ENCODE measurements at regions of chr12 and their contacts with region 1.

Region 1: GRCh38 chr12:11581179-11581755 is 68.2 kb upstream of the ETV6 start:
- DNase-seq: peak; percentile 65
- H3K4me3 ChIP-seq: no peak overlapping the region
- H3K27ac ChIP-seq: no peak overlapping the region
- H3K4me1 ChIP-seq: peaks cover 8% of the 10 kb centered on the region
- H3K27me3 ChIP-seq: no peaks in the 10 kb centered on the region
- CTCF ChIP-seq: peak in 1 of 2 donors; percentile 16
- POLR2A ChIP-seq: no peak

Region 2: DNA sequence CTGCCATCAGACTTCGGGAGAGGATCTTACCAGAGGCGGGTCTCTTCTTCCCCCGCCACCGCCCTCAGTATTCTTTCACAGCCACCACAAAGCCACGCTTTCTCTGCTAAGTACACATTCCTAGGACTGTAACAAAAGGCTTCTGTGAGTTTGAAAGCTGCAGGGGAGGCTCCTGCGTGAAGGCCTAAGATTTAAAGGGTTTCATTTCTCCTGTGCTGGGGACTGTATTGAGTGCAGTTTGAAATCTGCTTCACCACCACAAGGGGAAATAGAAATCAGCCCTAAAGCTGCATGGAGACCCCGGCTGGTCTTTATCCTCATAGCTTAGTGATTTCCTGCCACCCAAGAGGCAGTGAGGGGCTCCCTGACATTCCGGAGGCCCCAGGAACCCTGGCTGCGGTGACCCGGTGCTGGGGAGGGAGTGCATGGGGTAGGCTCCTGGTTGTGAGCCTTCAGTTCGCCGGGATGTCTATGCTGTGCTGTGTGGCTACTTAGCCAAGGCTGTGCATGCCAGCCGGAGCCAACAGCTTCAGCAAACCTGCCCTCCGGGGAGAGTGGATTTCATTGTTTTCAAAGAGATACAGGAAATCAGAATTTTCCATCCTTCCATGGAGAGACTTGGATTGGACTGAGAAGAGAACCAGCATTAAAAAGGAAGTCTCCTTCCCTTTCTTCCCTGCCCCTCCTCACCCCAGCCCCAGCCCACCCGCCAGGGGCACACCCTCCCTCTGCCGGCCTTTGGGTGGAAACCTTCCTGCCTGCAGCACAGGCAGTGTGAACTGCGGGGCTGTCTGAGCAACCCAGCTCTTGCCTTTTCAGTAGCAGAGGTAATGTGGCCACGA is 231.5 kb after region 1 on chr12:
- CTCF ChIA-PET with region 1: interaction called, 6 read pairs
- POLR2A ChIA-PET with region 1: no interaction called
- dilution Hi-C with region 1: no loop called
- intact Hi-C with region 1: loop called (anchors 5 kb)
- DNase-seq: peak; percentile 59
- H3K4me3 ChIP-seq: peak overlapping the region in 1 of 3 experiments; percentile 29
- H3K27ac ChIP-seq: peak overlapping the region; percentile 77
- H3K4me1 ChIP-seq: peaks cover 35% of the 10 kb centered on the region
- H3K27me3 ChIP-seq: no peaks in the 10 kb centered on the region
- CTCF ChIP-seq: peak in 1 of 2 donors; percentile 40
- POLR2A ChIP-seq: peak; percentile 46

Region 3: DNA sequence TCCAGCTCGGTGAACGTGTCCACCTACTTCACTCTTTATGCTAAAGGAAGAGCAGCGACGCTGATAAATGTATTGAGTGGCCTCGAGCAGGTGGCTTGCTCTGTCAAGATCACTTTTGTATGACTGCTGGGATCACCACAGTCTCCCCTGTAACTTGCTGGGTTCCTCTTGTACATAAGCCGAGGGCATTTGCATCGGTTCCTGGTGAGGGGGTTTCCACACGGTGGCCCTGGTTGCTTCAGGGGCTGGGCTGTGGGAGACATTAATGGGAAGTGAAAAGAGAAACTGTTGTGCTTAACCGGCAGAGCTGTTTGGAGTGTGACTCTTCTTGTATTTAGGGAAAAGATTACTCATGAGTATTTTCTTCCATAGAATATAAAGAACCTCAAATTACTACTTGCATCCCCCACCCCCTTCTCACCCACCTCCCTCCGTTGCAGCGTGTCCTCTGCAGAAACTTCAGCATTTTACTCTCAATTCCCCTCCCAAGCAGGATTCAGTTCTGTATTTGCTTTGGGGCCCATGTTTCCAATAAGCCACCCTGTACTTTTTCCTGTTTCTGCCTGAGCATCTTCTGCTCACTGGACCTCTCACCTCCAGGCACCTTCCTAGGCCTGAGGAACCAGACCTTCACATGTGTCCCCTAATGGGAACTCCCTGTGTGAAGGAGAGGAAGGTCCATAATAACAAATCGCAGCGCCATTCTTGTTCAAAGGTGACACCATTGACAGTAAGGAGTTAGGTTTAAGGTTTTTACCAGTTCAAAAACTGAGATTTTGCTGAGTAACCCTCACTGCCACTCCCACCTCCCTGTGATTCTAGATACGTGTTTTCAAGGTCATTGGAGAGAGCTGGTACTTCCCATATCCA is 255.2 kb after region 1 on chr12:
- CTCF ChIA-PET with region 1: interaction called, 4 read pairs
- POLR2A ChIA-PET with region 1: no interaction called
- dilution Hi-C with region 1: no loop called
- intact Hi-C with region 1: loop called (anchors 5 kb)
- DNase-seq: no peak
- H3K4me3 ChIP-seq: no peak overlapping the region
- H3K27ac ChIP-seq: no peak overlapping the region
- H3K4me1 ChIP-seq: peaks cover 49% of the 10 kb centered on the region
- H3K27me3 ChIP-seq: no peaks in the 10 kb centered on the region
- CTCF ChIP-seq: no peak
- POLR2A ChIP-seq: no peak

Region 4: GRCh38 chr12:11891754-11892386 is 310.6 kb after region 1 on chr12:
- CTCF ChIA-PET with region 1: interaction called, 26 read pairs
- POLR2A ChIA-PET with region 1: no interaction called
- dilution Hi-C with region 1: no loop called
- intact Hi-C with region 1: loop called (anchors 2 kb)
- DNase-seq: peak; percentile 53
- H3K4me3 ChIP-seq: no peak overlapping the region
- H3K27ac ChIP-seq: no peak overlapping the region
- H3K4me1 ChIP-seq: peaks cover 13% of the 10 kb centered on the region
- H3K27me3 ChIP-seq: no peaks in the 10 kb centered on the region
- CTCF ChIP-seq: peak in 1 of 2 donors; percentile 37
- POLR2A ChIP-seq: no peak

Measured in endothelial cell of umbilical vein (primary cell).